A549 (cell line): ENCODE measurements at regions of chr12 and their contacts with region 1.

Region 1: GRCh38 chr12:55996715-55997534 is at the start of gene SUOX:
- DNase-seq: peak; percentile 96 to 100
- ATAC-seq: peak; percentile 99 to 100
- H3K4me3 ChIP-seq: peak within 1 kb of the TSS; percentile 67
- H3K27ac ChIP-seq: peak within 1 kb of the TSS; percentile 77 to 89
- H3K4me1 ChIP-seq: peaks cover 17% of the 10 kb centered on the region
- CTCF ChIP-seq: no peak
- EP300 ChIP-seq: no peak
- POLR2A ChIP-seq: peak; percentile 55
- RAD21 ChIP-seq: no peak
- polyA plus RNA-seq, gene SUOX: 15.6 and 22.2 TPM in 2 replicates

Region 2: GRCh38 chr12:55797068-55797467 is 199.9 kb before region 1 on chr12:
- CTCF ChIA-PET with region 1: no interaction called
- POLR2A ChIA-PET with region 1: no interaction called
- DNase-seq: peak; percentile 62 to 65
- ATAC-seq: peak in 1 of 2 experiments; percentile 87; a peak in 3 of 6 replicates
- H3K4me3 ChIP-seq: no peak overlapping the region
- H3K27ac ChIP-seq: no peak overlapping the region
- H3K4me1 ChIP-seq: peaks cover 6% of the 10 kb centered on the region; the same call in 1 of the 3 replicates
- CTCF ChIP-seq: peak; percentile 51
- EP300 ChIP-seq: no peak
- POLR2A ChIP-seq: no peak
- RAD21 ChIP-seq: peak; percentile 42 to 64; a peak in 4 of 5 replicates

Region 3: GRCh38 chr12:55973598-55974307 is 23.2 kb before region 1 on chr12 and contains the start of gene RAB5B:
- CTCF ChIA-PET with region 1: interaction called, 96 read pairs
- POLR2A ChIA-PET with region 1: interaction called, 5 read pairs
- DNase-seq: peak; percentile 98 to 100
- ATAC-seq: peak; percentile 95 to 96
- H3K4me3 ChIP-seq: peak within 1 kb of the TSS; percentile 93
- H3K27ac ChIP-seq: peak within 1 kb of the TSS; percentile 94 to 95
- H3K4me1 ChIP-seq: peaks cover 20% of the 10 kb centered on the region; the same call in 2 of the 3 replicates
- CTCF ChIP-seq: no peak
- EP300 ChIP-seq: no peak
- POLR2A ChIP-seq: peak; percentile 84
- RAD21 ChIP-seq: no peak
- polyA plus RNA-seq, gene RAB5B: 90.4 and 93.7 TPM in 2 replicates

Region 4: GRCh38 chr12:56007564-56008559 is 10.9 kb after region 1 on chr12:
- CTCF ChIA-PET with region 1: interaction called, 33 read pairs
- POLR2A ChIA-PET with region 1: interaction called, 10 read pairs
- DNase-seq: peak in 1 of 2 experiments; percentile 61
- ATAC-seq: peak; percentile 72 to 81
- H3K4me3 ChIP-seq: peak overlapping the region; percentile 98
- H3K27ac ChIP-seq: peak overlapping the region; percentile 98 to 99
- H3K4me1 ChIP-seq: peaks cover 6% of the 10 kb centered on the region; the same call in 2 of the 3 replicates
- CTCF ChIP-seq: no peak
- EP300 ChIP-seq: no peak
- POLR2A ChIP-seq: no peak
- RAD21 ChIP-seq: no peak

Region 5: GRCh38 chr12:56020423-56021184 is 23.7 kb after region 1 on chr12 and contains the start of gene IKZF4:
- CTCF ChIA-PET with region 1: interaction called, 33 read pairs
- POLR2A ChIA-PET with region 1: no interaction called
- DNase-seq: no peak
- ATAC-seq: peak in 1 of 2 experiments; percentile 24; a peak in 3 of 6 replicates
- H3K4me3 ChIP-seq: no peak within 1 kb of the TSS
- H3K27ac ChIP-seq: no peak within 1 kb of the TSS
- H3K4me1 ChIP-seq: no peaks in the 10 kb centered on the region
- CTCF ChIP-seq: no peak
- EP300 ChIP-seq: no peak
- POLR2A ChIP-seq: no peak
- RAD21 ChIP-seq: no peak
- polyA plus RNA-seq, gene IKZF4: 2.0 and 2.9 TPM in 2 replicates

Region 6: GRCh38 chr12:56041552-56042429 is 44.9 kb after region 1 on chr12 and contains the start of gene RPS26:
- CTCF ChIA-PET with region 1: interaction called, 40 read pairs
- POLR2A ChIA-PET with region 1: no interaction called
- DNase-seq: peak; percentile 91 to 100
- ATAC-seq: peak; percentile 96 to 97
- H3K4me3 ChIP-seq: peak within 1 kb of the TSS; percentile 74
- H3K27ac ChIP-seq: peak within 1 kb of the TSS; percentile 90 to 99
- H3K4me1 ChIP-seq: peaks cover 16% of the 10 kb centered on the region
- CTCF ChIP-seq: peak; percentile 71
- EP300 ChIP-seq: no peak
- POLR2A ChIP-seq: peak; percentile 99
- RAD21 ChIP-seq: peak; percentile 70 to 83
- polyA plus RNA-seq, gene RPS26: 513 and 524 TPM in 2 replicates